ENCODE measurements at regions of chr11 and their contacts with region 1.

Region 1: GRCh38 chr11:29432719-29433325 is 584.0 kb downstream of the KCNA4 start:
- DNase-seq: peak; percentile 5 to 22 (median 8)
- ATAC-seq: no peak
- H3K4me3 ChIP-seq: no peak overlapping the region
- H3K27ac ChIP-seq: no peak overlapping the region
- H3K4me1 ChIP-seq: no peaks in the 10 kb centered on the region
- H3K27me3 ChIP-seq: no peaks in the 10 kb centered on the region
- CTCF ChIP-seq: peak in 2 of 3 experiments; percentile 28 to 43; a peak in 3 of 6 replicates
- EP300 ChIP-seq: no peak
- POLR2A ChIP-seq: no peak
- RAD21 ChIP-seq: peak; percentile 8 to 45; a peak in 2 of 4 replicates

Region 2: GRCh38 chr11:29676993-29677392 is 244.2 kb after region 1 on chr11:
- CTCF ChIA-PET with region 1: no interaction called
- POLR2A ChIA-PET with region 1: no interaction called
- in situ Hi-C with region 1: no loop called
- intact Hi-C with region 1: no loop called
- DNase-seq: no peak
- ATAC-seq: no peak
- H3K4me3 ChIP-seq: no peak overlapping the region
- H3K27ac ChIP-seq: no peak overlapping the region
- H3K4me1 ChIP-seq: no peaks in the 10 kb centered on the region
- H3K27me3 ChIP-seq: no peaks in the 10 kb centered on the region
- CTCF ChIP-seq: no peak
- EP300 ChIP-seq: no peak
- POLR2A ChIP-seq: no peak
- RAD21 ChIP-seq: no peak

Region 3: GRCh38 chr11:30333405-30333804 is 900.6 kb after region 1 on chr11:
- CTCF ChIA-PET with region 1: no interaction called
- POLR2A ChIA-PET with region 1: no interaction called
- in situ Hi-C with region 1: no loop called
- intact Hi-C with region 1: loop called (anchors 10 kb)
- DNase-seq: peak in 3 of 4 experiments; percentile 10 to 18 (median 11)
- ATAC-seq: peak; percentile 80
- H3K4me3 ChIP-seq: no peak overlapping the region
- H3K27ac ChIP-seq: no peak overlapping the region
- H3K4me1 ChIP-seq: no peaks in the 10 kb centered on the region
- H3K27me3 ChIP-seq: no peaks in the 10 kb centered on the region
- CTCF ChIP-seq: peak in 2 of 3 experiments; percentile 15 to 41; a peak in 2 of 6 replicates
- EP300 ChIP-seq: no peak
- POLR2A ChIP-seq: no peak
- RAD21 ChIP-seq: peak in 1 of 2 experiments; percentile 25; a peak in 1 of 4 replicates

Region 4: DNA sequence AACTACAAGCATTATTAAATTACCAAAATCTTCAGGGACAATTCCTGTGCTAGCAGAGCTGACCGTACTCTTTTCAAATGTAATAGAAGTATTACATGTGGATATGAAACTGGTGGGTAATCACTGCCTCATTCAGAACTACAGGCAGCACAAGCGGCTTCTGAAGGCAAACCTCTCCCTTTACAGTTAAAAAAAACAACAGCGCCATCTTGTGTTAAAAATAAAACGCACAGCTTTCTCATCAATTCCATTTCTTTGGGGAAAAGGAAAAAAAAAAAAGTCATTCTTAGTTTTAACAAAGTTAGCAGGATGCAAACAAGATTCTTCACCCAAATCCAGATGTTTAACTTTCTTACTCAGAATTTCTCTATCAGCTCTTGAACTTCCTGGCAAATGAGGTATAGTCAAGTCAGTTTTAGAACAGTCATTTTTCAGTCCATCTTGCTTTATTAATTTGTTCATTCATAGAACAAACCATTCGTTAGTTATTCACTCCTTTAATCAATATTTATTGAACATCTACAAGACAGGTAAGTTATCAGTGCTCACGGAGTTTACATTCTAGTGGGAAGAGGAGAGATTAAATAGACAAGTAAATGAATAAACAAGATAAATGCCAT is 1485.1 kb after region 1 on chr11:
- CTCF ChIA-PET with region 1: no interaction called
- POLR2A ChIA-PET with region 1: no interaction called
- in situ Hi-C with region 1: no loop called
- intact Hi-C with region 1: loop called (anchors 10 kb)
- DNase-seq: peak; percentile 13 to 50 (median 32)
- ATAC-seq: peak; percentile 65; the same call in 2 of the 3 replicates
- H3K4me3 ChIP-seq: no peak overlapping the region
- H3K27ac ChIP-seq: no peak overlapping the region
- H3K4me1 ChIP-seq: no peaks in the 10 kb centered on the region
- H3K27me3 ChIP-seq: no peaks in the 10 kb centered on the region
- CTCF ChIP-seq: peak in 2 of 3 experiments; percentile 52 to 67; a peak in 3 of 6 replicates
- EP300 ChIP-seq: no peak
- POLR2A ChIP-seq: no peak
- RAD21 ChIP-seq: peak; percentile 42 to 67

Measured in K562 (cell line).